Dorsolateral prefrontal cortex (tissue), 120 donors: ENCODE measurements at regions of chr11 and their contacts with region 1.

Region 1: GRCh38 chr11:73965076-73965860 is 14.4 kb downstream of the DNAJB13 start:
- DNase-seq: no peak
- H3K4me3 ChIP-seq: no peak overlapping the region
- H3K27ac ChIP-seq: no peak overlapping the region
- H3K27me3 ChIP-seq: no peaks in the 10 kb centered on the region
- CTCF ChIP-seq: no peak

Region 2: GRCh38 chr11:73143126-73143838 is 822.0 kb before region 1 on chr11:
- intact Hi-C with region 1: no loop called
- DNase-seq: no peak
- H3K4me3 ChIP-seq: peak overlapping the region; percentile 8 to 99 (median 89)
- H3K27ac ChIP-seq: peak overlapping the region; percentile 48 to 98 (median 94)
- H3K27me3 ChIP-seq: no peaks in the 10 kb centered on the region
- CTCF ChIP-seq: peak in 1 of 56 donors; percentile 8

Region 3: GRCh38 chr11:74170694-74171629 is 205.7 kb after region 1 on chr11 and contains the starts of genes C2CD3 and PPME1:
- intact Hi-C with region 1: loop called in 1 of 2 experiments (anchors 5 kb)
- DNase-seq: peak; percentile 94 to 99 (median 98)
- H3K4me3 ChIP-seq: peak within 1 kb of the TSS; percentile 67 to 99 (median 87)
- H3K27ac ChIP-seq: peak within 1 kb of the TSS; percentile 24 to 93 (median 86)
- H3K27me3 ChIP-seq: no peaks in the 10 kb centered on the region
- CTCF ChIP-seq: peak in 54 of 56 donors; percentile 26 to 79 (median 60)
- total RNA-seq, gene C2CD3: 30.0 to 76.8 (median 42.6) TPM
- total RNA-seq, gene PPME1: 48.5 to 158 (median 108) TPM

Region 4: GRCh38 chr11:74255741-74256369 is 290.6 kb after region 1 on chr11:
- intact Hi-C with region 1: loop called in 1 of 2 experiments (anchors 5 kb)
- DNase-seq: peak in 7 of 10 donors; percentile 7 to 58 (median 43)
- H3K4me3 ChIP-seq: no peak overlapping the region
- H3K27ac ChIP-seq: no peak overlapping the region
- H3K27me3 ChIP-seq: no peaks in the 10 kb centered on the region
- CTCF ChIP-seq: peak; percentile 72 to 97 (median 92)

Region 5: GRCh38 chr11:74321487-74322188 is 356.4 kb after region 1 on chr11:
- intact Hi-C with region 1: loop called in 1 of 2 experiments (anchors 10 kb)
- DNase-seq: peak in 1 of 10 donors; percentile 8
- H3K4me3 ChIP-seq: no peak overlapping the region
- H3K27ac ChIP-seq: no peak overlapping the region
- H3K27me3 ChIP-seq: no peaks in the 10 kb centered on the region
- CTCF ChIP-seq: peak in 52 of 56 donors; percentile 9 to 59 (median 44)